PC-9 (cell line): ENCODE measurements at regions of chr7 and their contacts with region 1.

Region 1: GRCh38 chr7:129644634-129645230 is 33.2 kb downstream of the NRF1 start:
- DNase-seq: peak in 1 of 2 experiments; percentile 49
- H3K4me3 ChIP-seq: no peak overlapping the region
- H3K27ac ChIP-seq: no peak overlapping the region
- H3K4me1 ChIP-seq: peaks cover 23% of the 10 kb centered on the region
- H3K27me3 ChIP-seq: no peaks in the 10 kb centered on the region
- CTCF ChIP-seq: peak; percentile 76

Region 2: DNA sequence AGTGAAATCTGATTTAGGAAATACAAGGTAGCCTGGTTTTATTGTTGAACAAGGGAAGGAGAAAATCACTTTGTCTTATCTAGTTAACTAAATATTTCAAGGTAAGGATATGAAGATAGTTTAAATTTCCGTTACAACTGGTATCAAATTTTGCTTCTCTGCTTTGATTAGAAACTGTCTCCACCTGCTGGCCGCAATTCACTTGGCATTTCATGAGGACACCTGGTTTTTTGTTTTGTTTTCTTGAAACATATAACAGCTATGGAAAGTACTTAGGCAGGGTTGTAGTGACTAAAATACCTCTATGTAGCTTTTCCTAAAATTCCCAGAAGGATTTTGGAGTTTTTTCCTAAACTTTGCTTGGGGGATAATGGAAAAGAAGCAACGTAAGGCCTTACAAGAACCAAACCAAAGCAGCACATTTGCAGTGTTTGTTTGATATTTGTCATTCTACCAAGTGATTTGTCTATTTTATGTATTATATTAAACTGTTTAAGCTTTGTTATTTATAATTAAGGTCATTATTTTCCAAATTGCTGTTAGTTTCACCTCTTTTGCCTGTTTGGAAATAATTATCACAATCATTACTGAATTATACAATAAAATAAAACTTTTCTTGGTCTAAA is 346.4 kb before region 1 on chr7:
- CTCF ChIA-PET with region 1: interaction called, 12 read pairs
- POLR2A ChIA-PET with region 1: no interaction called
- intact Hi-C with region 1: no loop called
- DNase-seq: peak in 1 of 2 experiments; percentile 50
- H3K4me3 ChIP-seq: no peak overlapping the region
- H3K27ac ChIP-seq: no peak overlapping the region
- H3K4me1 ChIP-seq: peaks cover 18% of the 10 kb centered on the region
- H3K27me3 ChIP-seq: no peaks in the 10 kb centered on the region
- CTCF ChIP-seq: peak; percentile 82

Region 3: GRCh38 chr7:129657363-129657762 is 12.6 kb after region 1 on chr7:
- CTCF ChIA-PET with region 1: interaction called, 10 read pairs
- POLR2A ChIA-PET with region 1: no interaction called
- intact Hi-C with region 1: no loop called
- DNase-seq: peak; percentile 38 to 39
- H3K4me3 ChIP-seq: no peak overlapping the region
- H3K27ac ChIP-seq: peak overlapping the region; percentile 27; the same call in 1 of the 2 replicates
- H3K4me1 ChIP-seq: peaks cover 5% of the 10 kb centered on the region; the same call in 1 of the 2 replicates
- H3K27me3 ChIP-seq: no peaks in the 10 kb centered on the region
- CTCF ChIP-seq: no peak